ENCODE measurements at regions of chr12 and their contacts with region 1.

Region 1: DNA sequence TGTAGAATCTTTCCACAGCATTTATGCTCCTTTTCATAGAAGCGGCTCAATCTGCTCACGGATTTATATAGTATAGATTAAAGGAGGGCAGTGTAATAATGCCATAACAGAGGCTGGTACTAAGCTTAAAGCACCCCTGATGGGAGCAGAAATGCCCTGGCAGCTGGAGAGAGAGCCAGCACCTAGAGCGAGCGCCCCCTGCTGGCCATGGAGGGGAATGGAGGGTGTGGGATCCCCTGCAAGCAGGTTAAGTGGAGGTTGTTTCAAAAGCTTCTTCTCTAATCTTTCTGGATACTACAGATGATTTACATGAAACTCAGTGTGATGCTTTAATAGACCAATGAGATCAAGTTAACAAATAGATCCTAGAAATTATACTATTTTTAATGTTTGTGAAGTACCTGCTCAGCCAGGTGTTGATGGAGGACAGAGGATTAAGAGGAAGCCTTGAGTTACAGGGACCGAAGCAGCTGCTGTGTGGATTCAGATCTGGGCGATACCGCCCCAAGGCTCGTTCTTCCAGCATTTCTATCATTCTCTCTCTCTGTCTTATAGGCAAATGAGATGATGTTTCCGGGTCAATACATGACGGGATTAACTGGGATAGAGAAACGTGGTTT is 1519.3 kb upstream of the TMEM132C start:
- DNase-seq: no peak
- H3K4me3 ChIP-seq: no peak overlapping the region
- H3K27ac ChIP-seq: no peak overlapping the region
- H3K4me1 ChIP-seq: no peaks in the 10 kb centered on the region
- H3K27me3 ChIP-seq: no peaks in the 10 kb centered on the region
- CTCF ChIP-seq: peak; percentile 18 to 81 (median 58)
- EP300 ChIP-seq: no peak
- POLR2A ChIP-seq: no peak

Region 2: DNA sequence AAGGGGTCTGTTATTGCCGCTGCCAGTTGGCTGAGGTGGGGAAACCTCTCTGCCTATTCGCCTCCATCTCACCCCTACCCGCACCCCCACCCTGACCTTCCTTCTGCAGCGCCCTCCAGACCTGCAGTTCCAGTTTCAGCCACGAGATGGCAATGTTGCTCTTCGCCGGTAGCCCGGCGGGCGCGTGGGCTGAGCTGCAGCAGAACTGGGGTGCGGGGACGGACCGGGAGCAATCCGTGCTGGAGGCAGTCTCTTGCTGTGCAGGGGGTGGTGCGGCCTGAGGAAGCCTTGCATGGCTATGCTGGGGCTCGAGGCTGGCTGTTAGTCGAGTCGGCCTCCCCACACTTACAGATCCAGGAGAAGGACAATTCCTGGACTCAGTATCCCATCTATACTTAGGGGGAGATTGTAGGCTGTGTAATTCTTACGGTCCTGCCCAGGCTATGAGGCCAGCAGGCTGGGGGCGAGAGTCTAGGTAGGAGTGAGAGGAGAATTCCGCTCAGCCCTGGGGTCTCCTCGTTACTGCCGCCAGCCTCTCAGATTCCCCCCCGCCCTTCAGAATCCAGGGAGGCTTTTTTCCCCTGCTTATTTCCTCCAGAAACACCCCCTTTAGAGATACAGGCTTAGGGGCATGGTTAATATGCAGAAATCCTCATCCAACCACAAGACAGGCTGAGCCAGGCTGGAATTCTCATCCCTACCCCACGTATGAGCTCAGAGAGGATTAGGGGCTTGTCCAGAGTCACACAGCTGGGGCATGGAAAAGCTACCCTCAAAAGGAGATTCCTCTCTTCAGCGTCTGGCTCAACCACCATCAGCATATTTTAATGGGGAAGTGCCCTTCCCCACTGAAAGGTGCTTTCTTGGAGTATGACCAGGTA is 1564.2 kb before region 1 on chr12:
- intact Hi-C with region 1: loop called (anchors 5 kb)
- DNase-seq: peak; percentile 80
- H3K4me3 ChIP-seq: no peak overlapping the region
- H3K27ac ChIP-seq: no peak overlapping the region
- H3K4me1 ChIP-seq: peaks cover 0 to 29% (median 26%) of the 10 kb centered on the region in 4 donors
- H3K27me3 ChIP-seq: peaks cover 7 to 35% (median 16%) of the 10 kb centered on the region in 3 donors
- CTCF ChIP-seq: peak; percentile 90 to 99 (median 94)
- EP300 ChIP-seq: no peak
- POLR2A ChIP-seq: no peak

Region 3: DNA sequence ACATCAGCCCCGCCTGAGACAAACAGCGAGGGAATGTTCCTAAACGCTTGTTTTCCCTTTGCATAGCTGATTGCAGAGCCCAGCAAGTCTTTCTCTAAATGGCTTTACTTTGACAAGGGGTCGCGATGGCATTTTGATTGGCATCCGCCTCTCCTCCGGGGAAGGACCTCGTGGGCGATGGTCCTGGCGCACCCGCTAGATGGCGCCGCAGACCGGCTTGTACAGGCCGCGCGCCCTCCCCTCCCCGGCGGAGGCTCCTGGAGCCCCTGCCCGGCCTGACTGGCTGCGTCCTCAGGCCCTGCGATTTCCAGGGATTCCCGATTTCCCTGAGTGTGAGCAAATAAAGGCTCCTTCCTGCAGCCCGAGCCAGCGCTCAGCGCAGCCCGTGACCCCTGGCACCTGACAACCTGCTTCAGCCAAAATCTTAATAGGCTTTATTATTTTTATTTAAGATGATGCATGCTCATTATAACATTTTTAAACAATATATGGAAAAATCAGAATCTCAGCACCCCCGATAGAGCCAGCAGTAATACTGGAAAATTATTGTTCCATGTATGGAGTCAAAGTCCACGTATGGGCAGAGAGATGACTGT is 1214.1 kb before region 1 on chr12:
- intact Hi-C with region 1: loop called (anchors 10 kb)
- DNase-seq: no peak
- H3K4me3 ChIP-seq: peak overlapping the region in 1 of 4 donors; percentile 1
- H3K27ac ChIP-seq: no peak overlapping the region
- H3K4me1 ChIP-seq: peaks cover 0 to 8% (median 2%) of the 10 kb centered on the region in 4 donors
- H3K27me3 ChIP-seq: peaks cover 0 to 22% (median 0%) of the 10 kb centered on the region in 3 donors
- CTCF ChIP-seq: peak in 3 of 4 experiments; percentile 39 to 66 (median 55)
- EP300 ChIP-seq: no peak
- POLR2A ChIP-seq: no peak

Measured in sigmoid colon (tissue), 7 donors.